IMR-90 (cell line): ENCODE measurements at regions of chr6 and their contacts with region 1.

Region 1: GRCh38 chr6:44084231-44085014 is 42.8 kb downstream of the MRPL14 start:
- DNase-seq: peak; percentile 75
- ATAC-seq: peak; percentile 36
- H3K4me3 ChIP-seq: no peak overlapping the region
- H3K27ac ChIP-seq: peak overlapping the region; percentile 31
- H3K4me1 ChIP-seq: peaks cover 11% of the 10 kb centered on the region
- H3K27me3 ChIP-seq: no peaks in the 10 kb centered on the region
- CTCF ChIP-seq: no peak
- POLR2A ChIP-seq: no peak
- RAD21 ChIP-seq: no peak

Region 2: DNA sequence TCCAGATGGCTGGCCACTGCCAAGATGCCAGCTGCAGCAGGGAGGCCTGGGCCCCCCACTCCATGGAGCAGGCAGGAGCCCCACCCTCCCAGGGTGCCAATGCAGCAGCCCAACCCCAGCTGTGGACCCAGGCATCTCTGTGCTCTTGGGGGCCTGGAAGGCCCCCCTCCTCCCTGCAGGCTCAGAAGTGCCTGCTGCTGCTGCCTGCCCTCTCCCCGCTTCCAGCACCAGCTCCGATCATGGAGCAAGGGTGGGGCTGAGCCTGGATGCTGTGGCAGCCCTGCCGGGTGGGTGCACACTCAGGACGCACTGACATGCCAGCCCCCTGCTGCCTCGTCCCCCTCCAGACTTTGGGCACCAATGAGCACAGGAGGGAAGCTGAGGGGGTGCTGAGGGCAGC is 671.9 kb before region 1 on chr6:
- CTCF ChIA-PET with region 1: no interaction called
- POLR2A ChIA-PET with region 1: no interaction called
- dilution Hi-C with region 1: no loop called
- in situ Hi-C with region 1: no loop called
- intact Hi-C with region 1: no loop called
- DNase-seq: no peak
- ATAC-seq: no peak
- H3K4me3 ChIP-seq: no peak overlapping the region
- H3K27ac ChIP-seq: no peak overlapping the region
- H3K4me1 ChIP-seq: no peaks in the 10 kb centered on the region
- H3K27me3 ChIP-seq: peaks cover 26% of the 10 kb centered on the region
- CTCF ChIP-seq: no peak
- POLR2A ChIP-seq: no peak
- RAD21 ChIP-seq: no peak

Region 3: DNA sequence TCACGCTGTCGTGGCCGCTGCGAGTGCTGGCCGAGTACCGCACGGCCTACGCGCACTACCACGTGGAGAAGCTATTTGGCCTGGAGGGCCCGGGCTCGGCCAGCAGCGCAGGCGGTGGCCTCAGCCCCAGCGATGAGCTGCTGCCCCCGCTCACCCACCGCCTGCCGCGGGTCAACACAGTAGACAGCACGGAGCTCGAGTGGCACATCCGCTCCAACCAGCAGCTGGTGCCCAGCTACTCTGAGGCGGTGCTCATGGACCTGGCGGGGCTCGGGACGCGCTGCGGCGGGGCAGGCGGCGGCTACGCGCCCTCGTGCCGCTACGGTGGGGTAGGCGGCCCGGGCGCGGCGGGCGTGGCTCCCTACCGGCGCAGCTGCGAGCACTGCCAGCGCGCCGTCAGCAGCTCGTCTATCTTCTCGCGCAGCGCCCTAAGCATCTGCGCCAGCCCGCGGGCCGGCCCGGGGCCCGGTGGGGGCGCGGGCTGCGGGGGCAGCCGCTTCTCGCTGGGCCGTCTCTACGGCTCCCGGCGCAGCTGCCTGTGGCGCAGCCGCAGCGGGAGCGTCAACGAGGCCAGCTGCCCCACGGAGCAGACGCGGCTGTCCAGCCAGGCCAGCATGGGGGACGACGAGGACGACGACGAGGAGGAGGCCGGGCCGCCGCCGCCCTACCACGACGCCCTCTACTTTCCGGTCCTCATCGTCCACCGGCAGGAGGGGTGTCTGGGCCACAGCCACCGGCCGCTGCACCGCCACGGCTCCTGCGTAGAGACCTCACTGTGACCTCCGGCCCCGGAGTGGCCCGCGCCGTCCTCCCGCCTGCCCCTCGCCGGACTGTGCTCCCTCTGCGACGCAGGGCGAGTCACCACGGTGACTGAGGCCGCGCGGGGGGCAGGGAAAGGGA is 191.6 kb after region 1 on chr6:
- CTCF ChIA-PET with region 1: no interaction called
- POLR2A ChIA-PET with region 1: interaction called, 11 read pairs
- dilution Hi-C with region 1: no loop called
- in situ Hi-C with region 1: no loop called
- intact Hi-C with region 1: no loop called
- DNase-seq: no peak
- ATAC-seq: peak; percentile 61
- H3K4me3 ChIP-seq: no peak overlapping the region
- H3K27ac ChIP-seq: no peak overlapping the region
- H3K4me1 ChIP-seq: no peaks in the 10 kb centered on the region
- H3K27me3 ChIP-seq: peaks cover 78% of the 10 kb centered on the region
- CTCF ChIP-seq: no peak
- POLR2A ChIP-seq: no peak
- RAD21 ChIP-seq: no peak